Endothelial cell of umbilical vein (primary cell): ENCODE measurements at regions of chr6 and their contacts with region 1.

Region 1: DNA sequence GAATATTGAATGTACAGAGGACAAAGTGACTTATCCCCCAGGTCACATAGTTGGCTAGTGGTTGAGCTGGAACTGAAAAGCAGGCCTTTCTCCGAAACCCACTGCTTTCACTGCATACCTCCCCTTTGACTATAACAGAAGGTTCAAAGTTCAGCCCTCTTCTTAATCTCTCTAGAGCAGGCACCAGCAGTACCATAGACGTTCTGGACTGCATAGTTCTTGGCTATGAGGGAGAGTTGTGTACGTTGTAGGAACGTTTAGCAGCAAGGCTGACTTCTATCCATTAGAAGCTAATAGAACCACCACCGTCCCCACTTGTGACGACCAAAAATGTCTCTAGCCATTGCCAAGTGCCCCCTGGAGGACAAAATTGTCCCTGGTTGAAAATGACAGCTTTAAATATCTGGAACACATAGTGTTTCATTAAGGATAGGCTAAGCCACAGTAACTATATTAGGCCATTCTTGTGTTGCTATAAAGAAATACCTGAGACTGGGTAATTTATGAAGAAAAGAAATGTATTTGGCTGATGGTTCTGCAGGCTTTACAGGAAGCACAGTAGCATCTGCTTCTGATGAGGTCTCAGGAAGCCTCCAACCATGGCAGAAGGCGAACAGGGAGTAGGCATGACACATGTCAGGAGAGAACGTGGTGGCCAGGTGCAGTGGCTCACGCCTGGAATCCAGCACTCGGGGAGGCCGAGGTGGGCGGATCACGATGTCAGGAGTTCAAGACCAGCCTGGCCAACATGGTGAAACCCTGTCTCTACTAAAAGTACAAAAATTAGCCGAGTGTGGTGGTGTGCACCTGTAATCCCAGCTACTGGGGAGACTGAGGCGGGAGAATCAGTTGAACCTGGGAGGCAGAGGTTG is 123.6 kb upstream of the MTHFD1L start:
- DNase-seq: peak; percentile 31
- H3K4me3 ChIP-seq: no peak overlapping the region
- H3K27ac ChIP-seq: no peak overlapping the region
- H3K4me1 ChIP-seq: no peaks in the 10 kb centered on the region
- H3K27me3 ChIP-seq: no peaks in the 10 kb centered on the region
- CTCF ChIP-seq: peak; percentile 43 to 48
- POLR2A ChIP-seq: no peak

Region 2: DNA sequence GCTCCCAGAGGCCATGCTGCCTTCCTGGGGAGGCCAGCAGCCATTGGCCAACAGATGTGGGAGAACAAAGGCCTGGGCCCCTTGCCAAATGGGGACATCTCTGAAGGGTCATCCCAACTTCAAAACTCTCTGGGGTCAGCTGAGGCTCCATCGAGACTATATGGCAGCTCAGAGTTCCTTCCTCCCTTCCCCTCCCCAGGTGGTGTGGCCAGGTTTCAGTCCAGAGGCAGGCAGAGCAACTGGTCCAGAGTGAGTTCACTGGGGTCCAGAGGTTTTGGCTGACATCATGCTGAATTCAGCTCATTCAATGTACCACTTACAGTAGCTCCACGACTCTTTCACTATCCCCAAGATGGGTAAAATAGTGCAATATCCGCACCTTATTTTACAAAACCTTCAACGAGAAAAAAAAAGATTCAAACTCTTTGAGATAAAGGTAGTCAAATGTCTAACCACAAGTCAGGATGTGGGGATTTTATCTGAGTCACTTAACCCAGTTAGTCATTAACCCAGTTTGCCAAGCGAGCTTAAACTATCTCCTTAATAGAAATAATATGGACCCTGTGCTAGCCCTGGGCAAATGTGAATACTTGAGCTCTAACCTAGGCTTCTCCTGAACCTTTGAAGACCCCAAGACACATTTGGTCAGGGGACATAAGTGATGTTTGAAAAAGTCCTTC is 250.6 kb before region 1 on chr6:
- CTCF ChIA-PET with region 1: no interaction called
- POLR2A ChIA-PET with region 1: no interaction called
- dilution Hi-C with region 1: no loop called
- intact Hi-C with region 1: loop called (anchors 5 kb)
- DNase-seq: no peak
- H3K4me3 ChIP-seq: no peak overlapping the region
- H3K27ac ChIP-seq: no peak overlapping the region
- H3K4me1 ChIP-seq: peaks cover 18% of the 10 kb centered on the region
- H3K27me3 ChIP-seq: no peaks in the 10 kb centered on the region
- CTCF ChIP-seq: no peak
- POLR2A ChIP-seq: no peak

Region 3: GRCh38 chr6:150813319-150813992 is 71.6 kb after region 1 on chr6:
- CTCF ChIA-PET with region 1: no interaction called
- POLR2A ChIA-PET with region 1: no interaction called
- dilution Hi-C with region 1: no loop called
- intact Hi-C with region 1: no loop called
- DNase-seq: no peak
- H3K4me3 ChIP-seq: no peak overlapping the region
- H3K27ac ChIP-seq: peak overlapping the region; percentile 12
- H3K4me1 ChIP-seq: peaks cover 10% of the 10 kb centered on the region
- H3K27me3 ChIP-seq: no peaks in the 10 kb centered on the region
- CTCF ChIP-seq: no peak
- POLR2A ChIP-seq: no peak